ENCODE measurements at regions of chr6 and their contacts with region 1.

Region 1: GRCh38 chr6:129787816-129788215 is 73.3 kb downstream of the TMEM244 start:
- DNase-seq: no peak
- H3K4me3 ChIP-seq: no peak overlapping the region
- H3K27ac ChIP-seq: no peak overlapping the region
- H3K4me1 ChIP-seq: peaks cover 26% of the 10 kb centered on the region
- H3K27me3 ChIP-seq: no peaks in the 10 kb centered on the region
- CTCF ChIP-seq: no peak

Region 2: GRCh38 chr6:129875610-129876520 is 88.0 kb after region 1 on chr6:
- CTCF ChIA-PET with region 1: no interaction called
- POLR2A ChIA-PET with region 1: no interaction called
- intact Hi-C with region 1: no loop called
- DNase-seq: no peak
- H3K4me3 ChIP-seq: no peak overlapping the region
- H3K27ac ChIP-seq: no peak overlapping the region
- H3K4me1 ChIP-seq: peaks cover 6% of the 10 kb centered on the region
- H3K27me3 ChIP-seq: no peaks in the 10 kb centered on the region
- CTCF ChIP-seq: no peak

Region 3: GRCh38 chr6:129886401-129887155 is 98.8 kb after region 1 on chr6:
- CTCF ChIA-PET with region 1: no interaction called
- POLR2A ChIA-PET with region 1: no interaction called
- intact Hi-C with region 1: loop called (anchors 1 kb)
- DNase-seq: peak; percentile 92
- H3K4me3 ChIP-seq: no peak overlapping the region
- H3K27ac ChIP-seq: peak overlapping the region; percentile 79
- H3K4me1 ChIP-seq: peaks cover 49% of the 10 kb centered on the region
- H3K27me3 ChIP-seq: no peaks in the 10 kb centered on the region
- CTCF ChIP-seq: no peak